ENCODE measurements at regions of chr12 and their contacts with region 1.

Region 1: DNA sequence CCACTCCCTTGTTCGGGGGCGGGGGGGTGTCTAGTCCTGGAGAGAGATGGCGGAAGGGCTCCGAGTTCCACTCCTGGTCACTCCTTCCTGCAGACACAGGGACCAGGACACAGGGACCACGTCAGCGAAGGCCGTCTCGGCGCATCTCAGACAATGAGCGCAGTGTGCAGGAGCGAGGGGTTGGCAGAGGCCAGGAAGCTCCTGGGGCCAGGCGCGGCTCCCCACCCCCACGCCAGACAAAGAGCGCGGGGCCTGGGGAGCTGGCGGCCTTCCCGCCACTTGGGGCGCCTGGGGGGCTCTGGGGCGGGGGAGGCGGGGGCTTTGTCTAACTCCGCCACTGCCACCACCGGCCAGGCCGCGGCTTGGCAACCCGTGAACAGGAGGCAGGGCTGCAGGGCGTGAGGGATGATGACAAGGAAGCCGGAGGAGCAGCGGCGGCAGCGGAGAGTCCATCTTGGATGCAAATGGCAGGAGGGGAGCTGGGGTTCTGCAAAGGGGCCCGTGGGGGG is 2.2 kb downstream of the CDK2AP1 start:
- DNase-seq: peak in 1 of 2 donors; percentile 66
- H3K4me3 ChIP-seq: peak overlapping the region; percentile 74 to 90
- H3K27ac ChIP-seq: peak overlapping the region; percentile 72 to 82
- H3K4me1 ChIP-seq: peaks cover 0 to 42% (median 29%) of the 10 kb centered on the region in 4 donors
- H3K27me3 ChIP-seq: no peaks in the 10 kb centered on the region
- CTCF ChIP-seq: no peak

Region 2: DNA sequence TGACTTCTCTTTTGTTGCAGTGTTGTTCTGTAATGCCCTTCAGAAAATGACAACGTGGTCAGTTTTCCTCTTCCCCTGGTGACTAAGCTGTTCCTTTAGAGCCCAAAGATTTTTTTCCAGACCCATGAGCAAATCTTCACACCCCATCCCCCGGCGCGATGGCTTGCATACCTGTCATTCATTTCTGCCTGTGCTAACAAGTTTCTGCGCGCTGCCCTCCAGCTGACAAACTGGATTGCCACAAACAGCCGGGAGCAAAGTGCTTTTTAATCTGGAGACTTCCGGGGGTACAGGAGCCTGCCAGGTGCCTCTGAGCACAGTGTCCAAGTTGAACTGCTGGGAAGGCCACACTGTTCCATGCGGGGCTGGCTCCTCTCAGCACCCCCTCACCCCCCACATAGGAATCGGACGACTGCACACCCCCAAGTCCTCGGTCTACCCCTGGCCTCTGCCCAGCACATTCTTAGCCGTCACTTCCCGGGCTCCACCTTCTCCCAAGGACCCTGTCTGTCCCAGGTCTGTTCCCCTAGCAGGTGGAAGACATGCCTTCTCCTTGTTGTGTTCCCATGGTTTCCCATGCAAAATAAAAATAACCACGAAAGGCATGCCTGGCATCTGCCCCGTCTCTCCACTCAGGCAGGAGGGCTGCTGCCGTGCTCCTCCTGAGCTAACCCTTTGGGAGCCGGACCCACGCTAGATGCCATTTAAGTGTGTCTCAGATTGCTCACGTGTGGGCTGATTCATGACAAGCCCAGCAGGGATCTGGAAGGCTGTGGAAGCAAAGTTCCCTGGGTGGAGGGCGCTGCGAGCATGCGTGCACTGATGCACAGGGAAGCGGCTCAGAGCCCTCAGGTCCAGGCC is 249.9 kb after region 1 on chr12:
- intact Hi-C with region 1: no loop called
- DNase-seq: peak; percentile 39 to 77
- H3K4me3 ChIP-seq: peak overlapping the region; percentile 13 to 23
- H3K27ac ChIP-seq: peak overlapping the region; percentile 75 to 83
- H3K4me1 ChIP-seq: peaks cover 0 to 27% (median 16%) of the 10 kb centered on the region in 4 donors
- H3K27me3 ChIP-seq: no peaks in the 10 kb centered on the region
- CTCF ChIP-seq: no peak

Region 3: GRCh38 chr12:123595730-123596129 is 326.3 kb after region 1 on chr12:
- intact Hi-C with region 1: loop called (anchors 5 kb)
- DNase-seq: no peak
- H3K4me3 ChIP-seq: no peak overlapping the region
- H3K27ac ChIP-seq: no peak overlapping the region
- H3K4me1 ChIP-seq: peaks cover 0 to 15% (median 4%) of the 10 kb centered on the region in 4 donors
- H3K27me3 ChIP-seq: no peaks in the 10 kb centered on the region
- CTCF ChIP-seq: no peak